Sigmoid colon (tissue), 7 donors: ENCODE measurements at regions of chr2 and their contacts with region 1.

Region 1: GRCh38 chr2:11129598-11130449 is 25.4 kb upstream of the SLC66A3 start:
- DNase-seq: no peak
- H3K4me3 ChIP-seq: peak overlapping the region in 3 of 4 donors; percentile 28 to 43 (median 42)
- H3K27ac ChIP-seq: peak overlapping the region in 1 of 4 donors; percentile 37
- H3K4me1 ChIP-seq: peaks cover 0 to 26% (median 22%) of the 10 kb centered on the region in 4 donors
- H3K27me3 ChIP-seq: no peaks in the 10 kb centered on the region
- CTCF ChIP-seq: no peak
- EP300 ChIP-seq: no peak
- POLR2A ChIP-seq: no peak

Region 2: DNA sequence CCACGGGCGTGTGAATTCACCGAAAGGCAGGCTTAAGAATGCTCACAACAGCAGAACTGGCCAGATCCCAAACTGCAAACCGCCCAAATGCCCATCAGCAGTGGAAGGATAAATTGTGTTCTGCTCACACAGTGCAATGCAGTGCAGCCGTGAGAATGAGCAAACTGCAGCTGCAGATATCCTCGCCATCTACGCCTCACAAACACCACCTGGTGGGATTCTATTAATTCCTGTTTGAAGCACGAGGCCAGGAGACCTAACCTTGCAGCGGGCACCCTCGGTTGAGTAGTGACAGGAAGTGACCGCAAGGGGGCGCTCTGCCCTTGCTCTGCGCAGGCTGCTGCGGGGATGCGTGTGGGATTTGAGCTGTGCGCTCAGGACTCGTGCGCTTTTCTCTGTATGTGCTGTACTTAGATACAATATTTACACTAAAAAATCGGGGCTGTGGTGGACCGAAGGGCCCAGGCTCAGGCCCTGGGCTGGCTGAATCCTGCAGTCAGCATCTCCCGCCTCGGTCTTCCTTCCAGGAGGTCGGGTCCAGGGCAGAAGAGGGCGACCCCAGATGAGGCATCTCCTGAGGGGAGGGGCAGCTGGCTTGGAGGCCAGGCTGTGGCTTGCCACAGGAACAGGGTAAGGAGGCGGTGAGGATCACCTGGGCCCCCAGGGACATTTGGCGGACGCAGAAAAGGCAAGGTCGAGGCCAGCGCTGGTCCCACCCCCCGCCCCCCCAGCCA is 297.5 kb before region 1 on chr2:
- intact Hi-C with region 1: loop called (anchors 2 kb)
- DNase-seq: peak; percentile 88
- H3K4me3 ChIP-seq: no peak overlapping the region
- H3K27ac ChIP-seq: no peak overlapping the region
- H3K4me1 ChIP-seq: peaks cover 0 to 31% (median 19%) of the 10 kb centered on the region in 4 donors
- H3K27me3 ChIP-seq: peaks cover 2 to 25% (median 6%) of the 10 kb centered on the region in 3 donors
- CTCF ChIP-seq: peak; percentile 74 to 94 (median 91)
- EP300 ChIP-seq: no peak
- POLR2A ChIP-seq: no peak

Region 3: DNA sequence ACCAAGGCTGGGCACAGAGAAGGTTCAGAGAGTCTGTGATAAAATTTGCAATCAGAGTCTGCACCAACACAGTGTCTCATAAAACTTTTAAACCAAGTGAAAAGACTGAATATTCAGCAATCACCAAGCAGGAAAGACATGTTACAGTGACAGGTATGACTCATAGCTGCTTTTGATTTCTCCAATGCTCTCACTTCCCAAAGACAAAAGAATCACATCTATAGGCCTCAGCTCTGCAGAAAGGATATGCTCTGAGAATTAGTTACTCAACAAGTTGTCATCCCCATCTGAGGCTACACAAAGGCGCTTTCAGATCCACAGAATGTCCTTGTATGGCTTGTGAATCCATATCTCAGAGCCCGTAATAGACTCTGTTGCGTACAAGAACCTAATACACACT is 125.6 kb before region 1 on chr2:
- intact Hi-C with region 1: no loop called
- DNase-seq: no peak
- H3K4me3 ChIP-seq: no peak overlapping the region
- H3K27ac ChIP-seq: no peak overlapping the region
- H3K4me1 ChIP-seq: no peaks in the 10 kb centered on the region
- H3K27me3 ChIP-seq: no peaks in the 10 kb centered on the region
- CTCF ChIP-seq: no peak
- EP300 ChIP-seq: no peak
- POLR2A ChIP-seq: no peak

Region 4: DNA sequence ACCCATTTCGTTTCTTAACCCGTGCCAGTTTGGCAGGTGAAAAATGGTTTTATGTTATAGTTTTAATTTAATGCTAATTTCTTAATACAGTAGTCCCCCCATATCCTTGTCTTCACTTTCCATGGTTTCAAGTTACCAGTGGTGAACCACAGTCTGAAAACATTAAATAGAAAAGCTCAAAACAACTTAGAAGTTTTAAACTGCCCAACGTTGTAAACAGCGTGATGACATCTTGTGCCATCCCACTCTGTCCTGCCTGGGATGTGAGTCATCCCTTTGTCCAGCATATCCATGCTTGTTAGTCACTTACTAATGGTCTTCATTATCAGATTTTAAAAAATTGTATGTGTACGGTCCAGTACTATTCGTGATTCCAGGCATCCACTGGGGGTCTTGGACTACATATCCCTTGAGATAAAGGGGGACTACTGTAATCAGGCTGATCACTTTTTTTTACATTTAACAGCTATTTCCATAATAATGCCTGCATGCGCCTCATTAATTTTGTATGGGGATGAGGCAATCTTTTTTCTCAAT is 57.3 kb after region 1 on chr2:
- intact Hi-C with region 1: loop called (anchors 5 kb)
- DNase-seq: no peak
- H3K4me3 ChIP-seq: no peak overlapping the region
- H3K27ac ChIP-seq: no peak overlapping the region
- H3K4me1 ChIP-seq: no peaks in the 10 kb centered on the region
- H3K27me3 ChIP-seq: no peaks in the 10 kb centered on the region
- CTCF ChIP-seq: no peak
- EP300 ChIP-seq: no peak
- POLR2A ChIP-seq: no peak

Region 5: DNA sequence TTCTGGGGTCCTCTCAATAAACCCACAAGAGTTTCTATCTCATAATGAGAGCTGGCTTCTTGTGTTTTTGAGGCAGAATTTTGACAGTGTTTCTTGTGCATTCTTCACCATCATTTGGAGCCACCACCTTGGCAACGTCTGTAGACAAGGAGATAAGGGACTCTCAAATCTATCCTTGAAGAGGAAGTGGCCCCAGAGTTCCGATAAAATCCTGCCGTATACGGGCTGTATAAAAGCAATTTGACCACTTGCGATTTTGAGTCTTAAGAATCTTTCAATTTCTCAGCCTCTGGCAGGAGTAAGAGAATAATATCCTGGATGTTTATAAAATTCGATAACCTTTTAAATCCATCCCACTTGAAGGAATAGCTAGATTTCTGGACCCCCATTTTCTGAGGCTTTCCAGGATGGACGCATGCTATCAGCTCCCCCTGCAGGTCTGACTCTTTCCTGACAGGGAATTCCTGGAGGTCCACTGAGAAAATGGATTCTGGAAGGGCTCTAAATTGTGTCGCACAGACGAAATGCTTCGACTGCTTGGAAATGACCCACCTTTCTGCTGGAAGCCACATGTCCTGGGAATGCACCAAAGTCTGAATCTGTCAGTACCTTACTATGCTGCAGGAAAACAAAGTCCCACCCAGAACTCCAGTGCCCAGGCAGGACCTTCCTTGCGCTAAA is 282.1 kb after region 1 on chr2:
- intact Hi-C with region 1: loop called (anchors 1 kb)
- DNase-seq: peak; percentile 72
- H3K4me3 ChIP-seq: peak overlapping the region; percentile 2 to 43 (median 38)
- H3K27ac ChIP-seq: peak overlapping the region in 2 of 4 donors; percentile 2 to 3
- H3K4me1 ChIP-seq: peaks cover 0 to 22% (median 14%) of the 10 kb centered on the region in 4 donors
- H3K27me3 ChIP-seq: no peaks in the 10 kb centered on the region
- CTCF ChIP-seq: peak; percentile 72 to 87 (median 76)
- EP300 ChIP-seq: no peak
- POLR2A ChIP-seq: no peak

Region 6: GRCh38 chr2:11583840-11584524 is 454.2 kb after region 1 on chr2:
- intact Hi-C with region 1: loop called (anchors 5 kb)
- DNase-seq: peak; percentile 86
- H3K4me3 ChIP-seq: no peak overlapping the region
- H3K27ac ChIP-seq: peak overlapping the region in 2 of 4 donors; percentile 20 to 54
- H3K4me1 ChIP-seq: peaks cover 0 to 10% (median 0%) of the 10 kb centered on the region in 4 donors
- H3K27me3 ChIP-seq: no peaks in the 10 kb centered on the region
- CTCF ChIP-seq: peak; percentile 7 to 57 (median 52)
- EP300 ChIP-seq: no peak
- POLR2A ChIP-seq: no peak